Astrocyte of the cerebellum (primary cell): ENCODE measurements at regions of chr21 and their contacts with region 1.

Region 1: GRCh38 chr21:39153373-39153772 is 29.9 kb downstream of the PSMG1 start:
- DNase-seq: no peak
- H3K4me3 ChIP-seq: no peak overlapping the region
- CTCF ChIP-seq: peak; percentile 66

Region 2: DNA sequence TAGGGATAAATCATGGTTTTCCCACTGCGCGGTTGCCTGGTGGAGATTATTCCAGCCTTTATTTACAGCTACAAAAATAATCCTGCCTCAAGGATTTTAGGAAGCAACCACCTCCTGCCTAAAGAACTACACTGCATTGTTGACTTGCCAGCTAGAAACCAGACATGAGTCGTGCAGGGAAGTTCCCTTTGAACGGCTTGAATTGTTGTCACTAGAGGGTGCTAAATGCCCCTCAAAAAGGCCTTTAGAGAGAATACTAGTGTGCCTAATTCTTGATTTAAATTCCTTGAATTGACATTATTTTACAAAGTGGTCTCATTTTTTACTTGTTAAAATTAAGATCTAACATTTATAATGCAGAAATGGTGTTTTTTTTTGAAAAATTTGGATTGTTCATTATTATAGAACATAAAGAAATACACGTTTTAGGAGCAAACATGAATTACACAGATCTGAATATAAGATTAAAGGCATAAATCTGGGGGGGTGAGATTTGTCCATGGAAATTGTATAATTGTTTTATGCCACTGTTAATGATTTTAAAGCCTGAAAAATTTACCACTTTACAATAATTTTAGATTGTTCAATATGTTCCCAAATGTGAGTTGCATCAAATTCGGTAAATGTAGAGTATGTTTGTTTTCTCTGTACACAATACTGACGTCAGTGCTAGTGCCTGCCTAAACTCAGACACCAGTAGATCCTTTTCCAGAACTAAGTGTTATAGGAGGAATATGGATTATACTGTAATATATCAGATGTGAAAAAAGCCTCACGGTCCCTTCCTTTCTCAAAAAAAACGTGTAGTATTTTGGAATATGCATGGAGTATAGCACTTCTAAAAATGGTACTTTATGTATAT is 647.5 kb before region 1 on chr21:
- in situ Hi-C with region 1: loop called (anchors 25 kb)
- DNase-seq: peak; percentile 70
- H3K4me3 ChIP-seq: no peak overlapping the region
- CTCF ChIP-seq: peak; percentile 79

Region 3: DNA sequence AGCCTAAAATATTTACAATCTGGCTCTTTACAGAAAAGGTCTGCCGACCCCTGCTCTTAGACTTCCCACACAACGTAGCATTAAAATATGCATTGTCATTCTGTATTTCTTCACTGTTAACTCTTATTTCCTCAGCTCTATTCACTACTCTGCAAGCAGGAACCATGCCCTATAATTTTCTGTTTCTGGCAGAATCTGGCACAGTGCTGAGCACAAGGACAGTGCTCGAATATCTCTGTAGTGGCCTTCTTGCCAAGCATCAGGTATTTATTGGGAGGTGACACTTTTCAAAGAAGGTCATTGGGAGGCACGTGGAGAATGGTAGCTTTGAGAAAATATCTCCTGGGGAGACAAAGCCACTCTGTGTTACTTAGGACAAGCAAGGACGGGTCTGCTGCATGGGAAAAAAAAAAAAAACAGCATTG is 48.0 kb before region 1 on chr21:
- in situ Hi-C with region 1: no loop called
- DNase-seq: no peak
- H3K4me3 ChIP-seq: no peak overlapping the region
- CTCF ChIP-seq: no peak